GM23248 (cell line): ENCODE measurements at regions of chr22 and their contacts with region 1.

Region 1: GRCh38 chr22:19321757-19322156 is 30.2 kb upstream of the CLTCL1 start:
- DNase-seq: no peak
- H3K4me3 ChIP-seq: no peak overlapping the region
- H3K27ac ChIP-seq: no peak overlapping the region
- H3K4me1 ChIP-seq: no peaks in the 10 kb centered on the region
- H3K27me3 ChIP-seq: no peaks in the 10 kb centered on the region

Region 2: GRCh38 chr22:19016081-19016766 is 305.5 kb before region 1 on chr22:
- in situ Hi-C with region 1: no loop called
- DNase-seq: no peak
- H3K4me3 ChIP-seq: no peak overlapping the region
- H3K27ac ChIP-seq: no peak overlapping the region
- H3K4me1 ChIP-seq: no peaks in the 10 kb centered on the region
- H3K27me3 ChIP-seq: no peaks in the 10 kb centered on the region; the same call in 1 of the 2 replicates

Region 3: DNA sequence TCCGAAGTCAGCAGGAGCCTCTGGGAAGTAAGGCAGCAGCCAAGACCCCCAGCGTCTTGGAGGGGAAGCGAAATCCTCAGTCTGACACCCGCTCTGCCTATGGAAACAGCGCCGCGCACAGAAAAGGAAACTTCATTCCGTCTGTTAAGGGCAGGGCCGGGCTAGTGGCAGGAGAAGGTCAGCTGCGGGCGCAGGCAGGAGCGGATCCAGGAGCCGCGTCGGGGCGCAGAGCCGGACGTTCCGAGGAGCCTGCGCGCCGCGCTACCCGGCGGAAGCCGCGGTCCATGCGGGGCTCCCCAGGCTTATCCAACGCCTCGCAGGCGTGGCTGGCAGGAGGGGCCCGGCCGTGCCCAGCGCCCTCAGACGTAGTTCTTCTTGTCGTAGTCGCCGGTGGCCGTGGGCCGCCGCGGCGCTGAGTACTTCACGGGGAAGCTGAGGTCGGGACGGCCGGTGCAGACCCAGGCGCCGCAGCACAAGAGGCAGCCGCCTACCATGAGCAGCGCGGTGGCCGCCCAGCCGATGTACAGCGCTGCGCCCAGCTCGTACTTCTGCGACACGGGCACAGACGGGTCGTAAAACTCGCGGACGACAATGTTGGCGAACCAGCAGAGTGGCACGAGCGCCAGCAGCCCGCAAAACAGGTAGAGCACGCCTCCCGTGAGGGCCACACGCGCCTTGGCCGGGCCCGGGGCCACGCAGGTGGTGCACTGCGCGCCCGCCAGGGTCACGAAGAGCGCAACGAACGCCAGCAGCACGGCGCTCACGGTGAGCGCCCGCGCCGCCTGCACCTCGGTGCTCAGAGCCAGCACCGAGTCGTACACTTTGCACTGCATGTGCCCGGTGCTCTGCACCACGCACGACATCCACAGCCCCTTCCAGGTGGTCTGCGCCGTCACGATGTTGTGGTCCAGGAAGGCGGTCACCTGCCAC is 201.7 kb after region 1 on chr22:
- in situ Hi-C with region 1: no loop called
- DNase-seq: peak; percentile 44
- H3K4me3 ChIP-seq: peak overlapping the region; percentile 46
- H3K27ac ChIP-seq: no peak overlapping the region
- H3K4me1 ChIP-seq: no peaks in the 10 kb centered on the region
- H3K27me3 ChIP-seq: 0 out of 2 replicates have a peak, but pooled peaks cover 5% of the 10 kb centered on the region

Region 4: GRCh38 chr22:19629720-19630419 is 308.1 kb after region 1 on chr22:
- in situ Hi-C with region 1: loop called (anchors 25 kb)
- DNase-seq: peak; percentile 82
- H3K4me3 ChIP-seq: no peak overlapping the region
- H3K27ac ChIP-seq: no peak overlapping the region
- H3K4me1 ChIP-seq: no peaks in the 10 kb centered on the region
- H3K27me3 ChIP-seq: no peaks in the 10 kb centered on the region

Region 5: GRCh38 chr22:19717691-19718455 is 396.1 kb after region 1 on chr22:
- in situ Hi-C with region 1: no loop called
- DNase-seq: peak; percentile 84
- H3K4me3 ChIP-seq: peak overlapping the region; percentile 73
- H3K27ac ChIP-seq: no peak overlapping the region
- H3K4me1 ChIP-seq: no peaks in the 10 kb centered on the region
- H3K27me3 ChIP-seq: no peaks in the 10 kb centered on the region

Region 6: DNA sequence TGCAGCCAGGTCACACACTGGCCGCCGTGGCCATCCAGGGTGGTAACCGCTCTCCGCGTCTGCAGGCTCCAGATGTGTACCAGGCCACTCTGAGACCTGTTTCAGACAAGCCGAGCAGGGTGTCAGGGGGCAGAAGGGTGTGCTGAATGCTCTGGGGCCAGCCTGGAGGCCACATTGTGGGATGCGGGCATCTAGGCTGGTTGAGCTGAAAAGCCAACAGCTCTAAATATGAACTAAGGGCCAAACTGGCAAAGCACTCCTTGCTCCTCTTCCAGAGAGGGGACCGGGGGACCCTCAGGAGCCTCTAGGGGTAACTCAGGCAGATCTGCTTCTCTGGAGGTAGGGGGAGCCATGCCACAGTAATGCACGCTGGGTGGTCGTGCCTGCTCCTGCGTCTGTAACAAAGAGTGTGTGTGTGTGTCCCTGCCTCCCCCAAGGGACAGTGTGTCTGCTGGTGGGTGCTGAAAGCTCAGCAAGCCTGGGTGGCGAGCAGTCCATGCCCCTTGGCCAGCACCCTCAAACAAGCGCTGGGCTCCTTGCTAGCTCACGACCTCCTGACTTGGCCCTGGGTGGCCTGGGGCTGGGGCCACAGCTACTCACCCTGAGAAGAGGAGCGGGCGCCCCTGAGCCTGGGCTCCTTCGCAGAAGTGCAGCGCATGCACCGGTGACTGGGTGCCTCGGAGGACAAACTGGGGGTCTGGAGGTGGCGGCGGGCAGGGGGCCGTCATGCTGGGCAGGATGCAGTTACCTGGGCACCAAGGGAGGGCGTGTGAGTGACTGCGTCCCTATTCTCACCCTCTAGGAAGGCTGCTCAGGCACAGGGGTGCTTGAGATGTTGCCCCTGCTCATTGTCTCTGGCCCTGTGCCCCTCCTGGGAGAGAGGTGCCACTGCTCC is 499.1 kb after region 1 on chr22:
- in situ Hi-C with region 1: no loop called
- DNase-seq: no peak
- H3K4me3 ChIP-seq: no peak overlapping the region
- H3K27ac ChIP-seq: no peak overlapping the region
- H3K4me1 ChIP-seq: no peaks in the 10 kb centered on the region
- H3K27me3 ChIP-seq: no peaks in the 10 kb centered on the region